ENCODE measurements at regions of chr9 and their contacts with region 1.

Region 1: GRCh38 chr9:31089549-31090221 is 1294.8 kb upstream of the ACO1 start:
- DNase-seq: no peak

Region 2: DNA sequence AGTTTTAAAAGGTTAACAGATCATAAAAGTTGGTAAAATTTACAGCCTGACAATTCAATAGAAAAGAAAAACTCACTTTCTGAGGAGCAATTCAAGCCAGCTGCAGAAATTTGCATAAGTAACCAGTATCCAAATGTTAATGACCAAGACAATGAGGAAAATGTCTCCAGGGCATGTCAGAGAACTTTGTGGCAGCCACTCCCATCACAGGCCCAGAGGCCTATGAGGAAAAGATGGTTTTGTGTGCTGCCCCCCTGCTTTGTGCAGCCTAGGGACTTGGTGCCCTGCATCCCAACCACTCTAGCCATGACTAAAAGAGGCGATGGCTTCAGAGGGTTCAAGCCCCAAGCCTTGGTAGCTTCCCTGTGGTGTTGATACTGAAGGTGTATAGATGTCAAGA is 111.7 kb before region 1 on chr9:
- intact Hi-C with region 1: no loop called
- DNase-seq: no peak

Region 3: GRCh38 chr9:31023847-31024246 is 65.8 kb before region 1 on chr9:
- intact Hi-C with region 1: loop called (anchors 10 kb)
- DNase-seq: no peak